Activated CD8-positive, alpha-beta T cell treated with anti-CD3 and anti-CD28 coated beads, Interleukin-2, amount 10 ng/mL, durations not matched to agents 7 days and 5 days (primary cell): ENCODE measurements at regions of chr17 and their contacts with region 1.

Region 1: GRCh38 chr17:67376737-67377487 is at the start of gene PITPNC1:
- DNase-seq: peak; percentile 93
- ATAC-seq: peak; percentile 79
- H3K4me3 Mint-ChIP-seq: peak within 1 kb of the TSS; percentile 89
- H3K27ac Mint-ChIP-seq: peak within 1 kb of the TSS; percentile 90
- H3K4me1 Mint-ChIP-seq: peaks cover 44% of the 10 kb centered on the region
- H3K27me3 Mint-ChIP-seq: no peaks in the 10 kb centered on the region
- total RNA-seq, gene PITPNC1: 74.0 to 76.5 TPM

Region 2: GRCh38 chr17:67366193-67367157 is 10.4 kb before region 1 on chr17 and contains the start of gene PSMD12:
- CTCF ChIA-PET with region 1: interaction called, 146 read pairs
- POLR2A ChIA-PET with region 1: interaction called, 20 read pairs
- DNase-seq: peak; percentile 95
- ATAC-seq: peak; percentile 94
- H3K4me3 Mint-ChIP-seq: peak within 1 kb of the TSS; percentile 89
- H3K27ac Mint-ChIP-seq: peak within 1 kb of the TSS; percentile 90
- H3K4me1 Mint-ChIP-seq: peaks cover 50% of the 10 kb centered on the region
- H3K27me3 Mint-ChIP-seq: no peaks in the 10 kb centered on the region
- total RNA-seq, gene PSMD12: 49.4 to 53.9 TPM

Region 3: DNA sequence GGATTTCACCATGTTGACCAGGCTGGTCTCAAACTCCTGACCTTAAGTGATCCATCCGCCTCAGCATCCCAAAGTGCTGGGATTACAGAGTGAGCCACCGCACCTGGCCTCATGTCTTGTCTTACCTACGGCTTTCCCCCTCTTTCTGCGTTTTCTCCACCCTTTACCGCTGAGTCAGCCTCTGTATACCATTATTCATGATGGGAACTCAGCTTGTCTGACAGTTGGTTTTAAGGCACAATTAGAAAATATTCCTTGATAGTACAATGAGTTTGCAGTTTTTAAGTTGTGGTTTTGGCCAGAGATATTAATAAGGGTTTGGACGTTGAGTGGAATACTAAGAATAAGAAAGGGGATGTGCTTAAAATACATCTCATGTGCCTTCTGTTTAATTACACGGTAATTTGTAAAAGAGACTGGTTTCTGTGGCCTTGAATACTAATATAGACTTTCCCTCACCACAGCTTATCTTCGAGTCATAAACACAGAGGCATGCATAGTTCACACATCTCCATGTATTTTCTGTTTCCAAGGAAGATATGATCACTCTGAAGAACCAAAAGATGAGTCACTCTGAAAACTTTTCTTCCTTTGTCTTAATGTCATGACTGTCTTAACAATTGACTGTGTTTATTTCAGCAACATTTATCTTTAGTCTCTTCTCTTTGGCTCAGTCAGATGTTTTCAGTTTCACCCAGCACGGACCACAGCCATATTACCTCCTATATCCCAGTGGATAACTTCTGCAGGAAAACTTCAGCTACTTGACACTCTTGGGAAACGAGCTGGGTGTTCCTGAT is 54.5 kb after region 1 on chr17:
- CTCF ChIA-PET with region 1: interaction called, 37 read pairs
- POLR2A ChIA-PET with region 1: interaction called, 4 read pairs
- DNase-seq: no peak
- ATAC-seq: peak; percentile 31
- H3K4me3 Mint-ChIP-seq: peak overlapping the region; percentile 20
- H3K27ac Mint-ChIP-seq: peak overlapping the region; percentile 39
- H3K4me1 Mint-ChIP-seq: peaks cover 73% of the 10 kb centered on the region
- H3K27me3 Mint-ChIP-seq: no peaks in the 10 kb centered on the region

Region 4: DNA sequence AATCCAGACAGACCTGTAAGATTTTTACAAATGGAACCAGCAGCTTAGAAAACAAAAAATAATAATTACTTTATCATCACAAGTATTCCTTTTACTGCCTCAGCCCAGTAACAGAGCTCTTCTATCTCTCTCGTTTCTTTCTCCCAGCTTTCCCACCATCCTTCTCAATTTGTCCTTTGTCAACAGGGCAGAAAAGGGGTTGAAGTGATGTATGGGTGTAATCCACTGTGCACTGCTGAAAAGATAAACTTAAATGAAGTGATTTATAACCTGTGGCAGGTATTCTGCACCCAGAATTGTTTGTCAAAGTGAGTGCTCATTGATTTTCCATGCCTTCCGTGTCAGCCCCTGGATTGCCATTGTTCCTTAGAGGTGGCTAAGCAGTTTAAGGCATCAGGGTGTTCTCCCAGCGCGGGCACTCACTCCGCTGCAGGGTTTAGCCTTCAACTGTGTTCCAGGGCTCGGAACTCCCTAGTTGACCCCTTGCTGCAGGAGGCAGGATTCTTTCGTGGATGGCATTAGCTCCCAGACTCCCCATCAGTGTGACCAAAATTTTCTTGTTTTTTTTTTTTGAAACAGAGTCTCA is 83.1 kb after region 1 on chr17:
- CTCF ChIA-PET with region 1: interaction called, 13 read pairs
- POLR2A ChIA-PET with region 1: interaction called, 3 read pairs
- DNase-seq: no peak
- ATAC-seq: no peak
- H3K4me3 Mint-ChIP-seq: no peak overlapping the region
- H3K27ac Mint-ChIP-seq: no peak overlapping the region
- H3K4me1 Mint-ChIP-seq: peaks cover 74% of the 10 kb centered on the region
- H3K27me3 Mint-ChIP-seq: no peaks in the 10 kb centered on the region

Region 5: DNA sequence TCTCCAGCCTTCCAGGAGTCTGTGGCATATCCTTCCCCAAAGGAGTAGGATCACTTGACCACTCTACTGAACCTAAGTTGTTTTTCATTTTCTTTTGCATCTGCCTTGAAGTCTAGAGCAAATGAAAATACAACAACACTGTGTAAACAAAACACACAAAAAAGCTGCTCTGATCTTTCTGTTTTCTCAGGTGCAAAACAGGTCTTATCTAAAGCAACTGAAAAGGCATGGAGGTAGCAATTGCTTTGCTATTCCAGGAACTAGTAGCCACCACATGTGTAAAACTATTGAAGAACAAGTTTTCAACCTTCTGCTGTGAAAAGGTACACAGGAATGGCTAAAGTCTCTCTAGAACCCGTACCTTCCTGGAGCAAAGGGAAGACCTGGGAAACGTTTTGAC is 127.3 kb after region 1 on chr17:
- CTCF ChIA-PET with region 1: no interaction called
- POLR2A ChIA-PET with region 1: no interaction called
- DNase-seq: no peak
- ATAC-seq: no peak
- H3K4me3 Mint-ChIP-seq: no peak overlapping the region
- H3K27ac Mint-ChIP-seq: no peak overlapping the region
- H3K4me1 Mint-ChIP-seq: peaks cover 36% of the 10 kb centered on the region
- H3K27me3 Mint-ChIP-seq: no peaks in the 10 kb centered on the region

Region 6: DNA sequence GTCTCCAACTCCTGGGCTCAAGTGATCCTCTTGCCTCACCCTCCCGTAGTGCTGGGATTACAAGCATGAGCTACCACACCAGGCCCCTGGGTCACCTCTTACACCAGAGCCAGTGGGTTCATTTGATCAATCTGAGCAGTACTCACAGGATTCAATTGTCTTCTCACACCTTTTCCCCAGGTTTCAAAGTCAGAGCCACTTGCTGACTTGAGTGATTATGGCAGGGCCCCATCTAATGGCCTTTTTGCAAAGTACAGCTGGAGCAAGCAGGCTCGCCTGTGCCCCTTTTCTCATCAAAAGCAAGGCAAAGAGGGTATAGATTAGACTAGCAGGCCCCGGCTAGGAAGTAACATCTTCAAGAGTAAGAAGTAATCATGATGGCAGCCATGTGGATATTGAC is 226.0 kb after region 1 on chr17:
- CTCF ChIA-PET with region 1: interaction called, 59 read pairs
- POLR2A ChIA-PET with region 1: interaction called, 6 read pairs
- DNase-seq: peak; percentile 68
- ATAC-seq: peak; percentile 77
- H3K4me3 Mint-ChIP-seq: no peak overlapping the region
- H3K27ac Mint-ChIP-seq: no peak overlapping the region
- H3K4me1 Mint-ChIP-seq: peaks cover 6% of the 10 kb centered on the region
- H3K27me3 Mint-ChIP-seq: no peaks in the 10 kb centered on the region

Region 7: DNA sequence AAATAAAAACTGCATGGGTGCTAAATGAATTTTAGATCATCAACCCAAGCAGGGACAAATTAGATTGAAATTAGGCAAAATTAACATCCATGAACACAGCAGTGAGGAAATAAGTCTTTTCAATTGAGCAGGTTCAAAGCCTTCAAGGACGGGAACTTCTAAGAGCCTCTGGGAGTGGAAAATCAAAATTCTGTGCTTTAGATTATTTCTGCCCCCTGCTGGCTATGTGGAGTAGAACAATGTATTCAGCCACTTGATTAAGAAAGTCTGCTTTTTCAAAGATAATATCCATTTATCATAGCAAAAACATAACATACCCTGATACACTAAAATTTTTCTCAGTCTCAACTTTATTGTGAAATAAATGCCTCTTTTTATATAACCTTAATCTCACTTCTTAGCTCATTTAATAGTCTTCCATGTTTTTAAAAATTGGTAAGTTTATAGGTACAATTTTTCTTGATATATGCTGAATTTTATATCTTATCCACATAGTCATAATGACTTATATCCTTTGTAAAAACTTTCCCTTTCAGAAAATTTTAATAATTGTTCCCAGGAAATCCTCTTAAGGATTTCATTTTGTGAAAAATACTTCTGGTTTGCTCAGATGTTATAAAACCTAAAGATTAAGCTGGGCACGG is 312.7 kb after region 1 on chr17:
- CTCF ChIA-PET with region 1: interaction called, 75 read pairs
- POLR2A ChIA-PET with region 1: interaction called, 4 read pairs
- DNase-seq: peak; percentile 72
- ATAC-seq: no peak
- H3K4me3 Mint-ChIP-seq: no peak overlapping the region
- H3K27ac Mint-ChIP-seq: no peak overlapping the region
- H3K4me1 Mint-ChIP-seq: peaks cover 5% of the 10 kb centered on the region
- H3K27me3 Mint-ChIP-seq: no peaks in the 10 kb centered on the region